ENCODE measurements at regions of chr4 and their contacts with region 1.

Region 1: GRCh38 chr4:53929955-53930798 is 134.2 kb downstream of the CHIC2 start:
- DNase-seq: no peak
- H3K4me3 Mint-ChIP-seq: no peak overlapping the region
- H3K27ac Mint-ChIP-seq: no peak overlapping the region
- H3K4me1 Mint-ChIP-seq: no peaks in the 10 kb centered on the region
- H3K27me3 Mint-ChIP-seq: peaks cover 11% of the 10 kb centered on the region

Region 2: DNA sequence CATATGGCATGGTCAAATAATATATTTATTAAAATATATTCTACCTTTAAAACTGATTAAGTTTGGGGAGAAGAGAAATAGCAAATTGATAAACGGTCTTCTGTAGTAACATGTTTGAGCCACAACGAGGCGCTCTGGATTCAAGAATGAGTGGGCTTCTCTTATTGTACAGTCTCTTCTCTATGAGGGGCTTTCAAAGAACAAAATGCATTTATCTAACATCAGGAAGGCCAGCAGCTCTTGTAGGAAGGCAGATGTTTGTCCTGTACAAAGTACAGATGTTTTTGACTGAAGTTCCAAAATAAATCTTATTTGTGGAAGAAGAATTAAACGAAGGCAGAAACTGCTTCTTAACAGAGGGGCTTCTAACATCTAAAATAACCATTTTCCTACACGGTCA is 914.5 kb before region 1 on chr4:
- intact Hi-C with region 1: loop called (anchors 10 kb)
- DNase-seq: no peak
- H3K4me3 Mint-ChIP-seq: no peak overlapping the region
- H3K27ac Mint-ChIP-seq: no peak overlapping the region
- H3K4me1 Mint-ChIP-seq: peaks cover 28% of the 10 kb centered on the region
- H3K27me3 Mint-ChIP-seq: no peaks in the 10 kb centered on the region

Region 3: DNA sequence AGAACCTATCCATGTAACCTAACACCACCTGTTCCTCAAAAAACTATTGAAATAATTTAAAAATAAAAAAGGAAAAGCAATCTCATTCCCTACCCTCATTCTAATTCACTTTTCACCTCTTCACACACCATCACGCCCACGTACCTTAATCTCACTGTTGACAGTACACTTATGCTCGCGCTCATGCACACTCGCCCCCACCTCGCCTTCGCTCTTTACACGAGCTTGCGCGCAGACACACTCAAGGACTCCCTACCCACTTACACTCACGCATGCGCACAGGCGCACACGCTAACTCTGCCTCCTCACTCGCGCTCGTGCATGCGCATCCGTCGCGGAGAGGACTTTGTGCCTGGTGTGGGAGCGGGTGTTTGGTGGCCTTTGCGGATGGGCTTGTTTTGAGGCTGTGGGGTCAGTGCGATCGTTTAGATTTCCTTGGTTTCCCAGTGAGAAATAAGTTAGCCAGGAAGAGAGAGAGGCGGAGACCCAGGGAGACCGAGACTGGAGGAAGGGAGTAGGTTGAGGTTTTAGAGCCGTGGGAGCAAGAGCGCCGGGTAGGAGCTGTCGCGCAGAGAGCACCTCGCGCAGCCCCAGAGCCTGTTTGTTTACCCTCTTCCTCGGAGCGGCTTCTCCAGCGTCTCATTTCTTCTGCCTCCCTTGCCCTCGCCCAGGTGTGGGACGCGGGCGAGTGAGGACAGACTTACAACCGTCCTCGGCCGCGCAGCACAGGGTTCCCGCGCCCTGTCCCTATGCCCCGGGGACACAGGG is 161.6 kb after region 1 on chr4:
- intact Hi-C with region 1: loop called (anchors 2 kb)
- DNase-seq: peak; percentile 58
- H3K4me3 Mint-ChIP-seq: peak overlapping the region; percentile 85
- H3K27ac Mint-ChIP-seq: peak overlapping the region; percentile 32
- H3K4me1 Mint-ChIP-seq: peaks cover 20% of the 10 kb centered on the region
- H3K27me3 Mint-ChIP-seq: peaks cover 81% of the 10 kb centered on the region

Region 4: GRCh38 chr4:54217642-54218495 is 287.7 kb after region 1 on chr4:
- intact Hi-C with region 1: loop called (anchors 1 kb)
- DNase-seq: peak; percentile 37
- H3K4me3 Mint-ChIP-seq: no peak overlapping the region
- H3K27ac Mint-ChIP-seq: no peak overlapping the region
- H3K4me1 Mint-ChIP-seq: peaks cover 1% of the 10 kb centered on the region
- H3K27me3 Mint-ChIP-seq: peaks cover 32% of the 10 kb centered on the region